Dorsolateral prefrontal cortex (tissue), 120 donors: ENCODE measurements at regions of chr16 and their contacts with region 1.

Region 1: GRCh38 chr16:84029297-84030047 is 13.1 kb downstream of the SLC38A8 start:
- DNase-seq: no peak
- H3K4me3 ChIP-seq: no peak overlapping the region
- H3K27ac ChIP-seq: no peak overlapping the region
- H3K27me3 ChIP-seq: peaks cover 0 to 6% (median 0%) of the 10 kb centered on the region in 45 donors
- CTCF ChIP-seq: no peak

Region 2: GRCh38 chr16:83994087-83994486 is 35.4 kb before region 1 on chr16:
- intact Hi-C with region 1: loop called in 1 of 2 experiments (anchors 5 kb)
- DNase-seq: no peak
- H3K4me3 ChIP-seq: no peak overlapping the region
- H3K27ac ChIP-seq: peak overlapping the region in 10 of 59 donors; percentile 1 to 76 (median 42)
- H3K27me3 ChIP-seq: no peaks in the 10 kb centered on the region
- CTCF ChIP-seq: no peak